ENCODE measurements at regions of chr3 and their contacts with region 1.

Region 1: GRCh38 chr3:20511863-20512505 is 326.0 kb upstream of the SGO1 start:
- DNase-seq: peak; percentile 76
- ATAC-seq: peak; percentile 98
- H3K4me3 ChIP-seq: no peak overlapping the region
- H3K27ac ChIP-seq: no peak overlapping the region
- H3K4me1 ChIP-seq: no peaks in the 10 kb centered on the region
- H3K27me3 ChIP-seq: no peaks in the 10 kb centered on the region
- CTCF ChIP-seq: peak; percentile 87

Region 2: DNA sequence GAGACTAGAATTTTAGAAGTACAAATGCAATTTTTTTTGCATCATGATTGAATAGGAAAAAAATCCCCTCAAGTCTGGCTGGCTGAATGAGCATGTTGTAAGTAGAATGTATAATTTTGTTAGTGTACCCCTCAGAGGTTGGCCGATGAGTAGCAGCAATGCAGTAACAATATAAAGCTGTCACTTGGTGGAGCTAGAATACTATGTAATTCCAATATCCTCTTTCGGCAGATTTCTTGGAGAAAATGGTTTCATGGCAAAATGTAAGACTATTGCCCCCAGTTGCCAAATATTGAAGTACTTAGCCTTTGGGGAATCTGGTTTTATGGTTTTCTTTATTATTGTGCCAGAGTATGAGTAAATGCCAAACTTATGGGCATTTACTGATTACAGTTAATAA is 286.2 kb before region 1 on chr3:
- CTCF ChIA-PET with region 1: no interaction called
- POLR2A ChIA-PET with region 1: no interaction called
- intact Hi-C with region 1: loop called (anchors 5 kb)
- DNase-seq: peak; percentile 61
- ATAC-seq: peak; percentile 85
- H3K4me3 ChIP-seq: no peak overlapping the region
- H3K27ac ChIP-seq: no peak overlapping the region
- H3K4me1 ChIP-seq: no peaks in the 10 kb centered on the region
- H3K27me3 ChIP-seq: 0 out of 2 replicates have a peak, but pooled peaks cover 4% of the 10 kb centered on the region
- CTCF ChIP-seq: peak; percentile 70

Region 3: DNA sequence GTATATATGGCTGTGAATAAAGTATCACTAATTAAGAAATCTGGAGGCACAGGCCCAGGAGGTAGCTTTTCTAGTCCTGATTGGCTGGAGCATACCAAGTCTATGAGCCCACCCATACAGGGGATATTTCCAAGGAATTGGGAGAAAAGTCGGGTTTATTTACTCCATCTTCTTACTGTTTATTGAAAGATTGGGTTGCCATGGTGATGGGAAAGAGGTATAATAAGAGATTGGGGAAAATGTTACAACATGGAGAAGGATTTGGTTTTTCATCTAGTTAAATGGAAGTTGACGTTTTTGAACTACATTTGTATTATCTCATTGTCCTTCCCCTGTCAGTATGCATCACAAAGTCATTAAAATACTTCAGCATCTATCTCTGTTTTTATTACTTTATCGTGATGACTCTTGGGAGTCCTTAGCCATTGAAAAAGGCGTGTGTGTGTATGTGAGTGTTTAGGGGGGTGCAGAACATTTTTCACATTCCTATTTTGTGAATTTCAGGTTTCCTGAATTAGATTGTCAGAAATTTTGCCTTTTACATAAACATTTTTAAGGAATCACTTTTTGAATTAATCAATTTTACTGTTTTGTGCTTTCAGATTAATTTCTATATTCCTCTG is 34.5 kb after region 1 on chr3:
- CTCF ChIA-PET with region 1: no interaction called
- POLR2A ChIA-PET with region 1: no interaction called
- intact Hi-C with region 1: no loop called
- DNase-seq: no peak
- ATAC-seq: no peak
- H3K4me3 ChIP-seq: no peak overlapping the region
- H3K27ac ChIP-seq: no peak overlapping the region
- H3K4me1 ChIP-seq: no peaks in the 10 kb centered on the region
- H3K27me3 ChIP-seq: no peaks in the 10 kb centered on the region
- CTCF ChIP-seq: no peak

Region 4: DNA sequence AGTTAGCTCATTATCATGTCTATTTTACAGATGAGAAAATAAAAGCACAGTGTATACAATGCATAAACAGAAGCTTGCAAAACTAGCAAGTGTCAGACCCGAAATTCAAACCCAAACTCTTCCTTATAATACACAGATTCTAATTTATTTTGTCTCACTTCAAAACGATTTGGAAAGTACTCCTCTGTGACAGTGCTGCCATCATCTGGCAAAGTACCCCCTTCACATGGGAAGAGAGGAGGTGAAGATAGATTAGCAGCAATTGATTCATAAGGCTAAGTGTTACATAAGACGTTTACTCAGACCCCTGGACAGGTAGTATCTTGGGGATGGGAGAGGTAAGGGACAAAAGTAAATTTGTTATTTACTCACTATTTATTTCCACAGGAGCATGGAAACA is 418.1 kb after region 1 on chr3:
- CTCF ChIA-PET with region 1: no interaction called
- POLR2A ChIA-PET with region 1: no interaction called
- intact Hi-C with region 1: loop called (anchors 1 kb)
- DNase-seq: peak; percentile 37
- ATAC-seq: 0 out of 2 replicates have a peak, but pooled peaks have one; percentile 37
- H3K4me3 ChIP-seq: no peak overlapping the region
- H3K27ac ChIP-seq: no peak overlapping the region
- H3K4me1 ChIP-seq: no peaks in the 10 kb centered on the region
- H3K27me3 ChIP-seq: no peaks in the 10 kb centered on the region
- CTCF ChIP-seq: peak; percentile 66

Region 5: DNA sequence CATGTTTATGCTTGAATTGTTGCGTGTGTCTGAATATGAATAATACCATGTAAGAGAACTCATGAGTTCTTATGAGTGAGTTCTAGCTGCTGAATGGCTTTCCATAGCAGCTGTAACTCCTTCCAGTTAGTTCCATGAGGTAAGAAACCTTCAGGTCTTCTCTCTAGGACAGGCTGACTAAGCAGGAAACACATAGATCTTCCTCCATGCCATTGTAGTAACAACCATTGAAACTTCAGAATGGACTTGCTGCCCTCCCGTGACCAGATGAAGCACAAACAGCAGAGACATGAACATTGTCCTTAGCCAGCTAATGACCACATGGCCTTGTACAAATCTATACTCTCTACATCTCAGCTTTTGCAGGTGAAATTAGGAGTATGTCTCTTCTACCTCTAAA is 1039.0 kb after region 1 on chr3:
- CTCF ChIA-PET with region 1: no interaction called
- POLR2A ChIA-PET with region 1: no interaction called
- intact Hi-C with region 1: loop called (anchors 5 kb)
- DNase-seq: peak; percentile 38
- ATAC-seq: peak; percentile 57; the same call in 1 of the 2 replicates
- H3K4me3 ChIP-seq: no peak overlapping the region
- H3K27ac ChIP-seq: no peak overlapping the region
- H3K4me1 ChIP-seq: no peaks in the 10 kb centered on the region
- H3K27me3 ChIP-seq: no peaks in the 10 kb centered on the region
- CTCF ChIP-seq: peak; percentile 32; the same call in 1 of the 2 replicates

Region 6: DNA sequence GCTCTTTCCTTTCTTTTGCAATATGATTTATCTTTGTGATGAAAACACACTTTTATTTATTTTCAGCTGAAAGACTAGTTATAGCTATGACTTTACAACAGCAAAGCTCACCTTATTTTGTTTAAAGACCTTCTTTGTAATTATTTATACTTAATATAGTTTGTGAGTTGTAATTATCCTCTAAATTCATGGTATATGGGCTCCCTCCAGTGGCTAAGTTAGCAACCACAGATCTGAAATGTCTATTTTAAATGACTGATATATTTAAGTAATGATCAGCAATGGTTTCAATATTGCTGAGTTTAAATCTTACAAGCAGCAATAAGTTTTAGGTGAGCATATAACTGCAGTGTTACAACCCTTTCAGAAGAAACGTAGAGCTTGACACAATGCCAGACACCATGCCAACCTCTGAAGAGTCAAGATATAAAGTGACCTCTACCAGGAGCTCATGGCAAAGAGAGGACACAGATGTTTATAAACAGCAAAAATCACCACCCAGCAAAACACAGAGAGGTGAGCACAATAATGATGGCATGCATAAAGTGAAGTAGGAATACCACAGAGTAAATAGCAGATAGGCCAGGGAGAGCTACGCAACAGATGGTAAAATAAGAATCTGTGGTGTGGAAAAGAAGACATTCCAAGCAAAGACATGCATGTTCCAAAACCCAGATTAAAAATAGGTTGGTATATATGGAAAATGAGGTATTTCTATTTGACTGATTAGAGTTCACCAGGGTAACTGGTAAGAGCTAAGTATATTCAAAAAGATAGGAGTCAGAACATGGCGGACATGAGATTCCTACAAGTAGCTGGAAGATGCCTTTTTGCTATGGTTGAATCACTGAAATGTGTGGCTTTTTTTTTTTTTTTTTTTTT is 1382.7 kb after region 1 on chr3:
- CTCF ChIA-PET with region 1: no interaction called
- POLR2A ChIA-PET with region 1: no interaction called
- intact Hi-C with region 1: loop called (anchors 1 kb)
- DNase-seq: peak; percentile 66
- ATAC-seq: no peak
- H3K4me3 ChIP-seq: no peak overlapping the region
- H3K27ac ChIP-seq: no peak overlapping the region
- H3K4me1 ChIP-seq: peaks cover 13% of the 10 kb centered on the region; the same call in 1 of the 2 replicates
- H3K27me3 ChIP-seq: no peaks in the 10 kb centered on the region
- CTCF ChIP-seq: peak; percentile 87

Measured in PC-3 (cell line).